ENCODE measurements at regions of chrX and their contacts with region 1.

Region 1: GRCh38 chrX:140050906-140051305 is 85.6 kb upstream of the CXorf66 start:
- DNase-seq: peak; percentile 29
- ATAC-seq: no peak
- H3K4me3 ChIP-seq: no peak overlapping the region
- H3K27ac ChIP-seq: no peak overlapping the region
- H3K4me1 ChIP-seq: no peaks in the 10 kb centered on the region
- H3K27me3 ChIP-seq: peaks cover 19% of the 10 kb centered on the region
- CTCF ChIP-seq: peak; percentile 60

Region 2: GRCh38 chrX:140503714-140504351 is 452.9 kb after region 1 on chrX:
- CTCF ChIA-PET with region 1: no interaction called
- POLR2A ChIA-PET with region 1: interaction called, 11 read pairs
- intact Hi-C with region 1: loop called (anchors 10 kb)
- DNase-seq: no peak
- ATAC-seq: peak; percentile 34; the same call in 1 of the 2 replicates
- H3K4me3 ChIP-seq: no peak overlapping the region
- H3K27ac ChIP-seq: no peak overlapping the region
- H3K4me1 ChIP-seq: peaks cover 16% of the 10 kb centered on the region
- H3K27me3 ChIP-seq: peaks cover 88% of the 10 kb centered on the region
- CTCF ChIP-seq: no peak

Region 3: DNA sequence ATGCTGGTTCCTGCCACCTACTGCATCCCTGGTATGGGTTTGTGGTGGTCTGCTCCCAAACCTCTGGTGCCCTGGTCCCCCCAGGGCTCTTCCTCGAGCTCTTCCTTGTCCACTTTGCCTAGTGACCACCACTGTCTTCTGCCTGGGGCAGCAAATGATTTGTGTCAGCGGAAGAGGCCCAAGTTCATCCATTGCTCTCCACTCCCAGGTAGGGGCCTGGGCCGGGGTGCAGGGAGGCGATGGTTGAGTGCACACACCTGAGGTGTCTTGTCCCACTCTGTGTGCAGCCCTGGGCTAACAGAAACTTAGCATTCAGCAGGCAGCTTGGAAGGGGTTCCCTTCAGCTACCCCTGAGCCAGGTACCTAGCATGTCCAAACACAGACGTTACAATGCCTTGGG is 529.6 kb after region 1 on chrX:
- CTCF ChIA-PET with region 1: no interaction called
- POLR2A ChIA-PET with region 1: no interaction called
- intact Hi-C with region 1: no loop called
- DNase-seq: no peak
- ATAC-seq: no peak
- H3K4me3 ChIP-seq: no peak overlapping the region
- H3K27ac ChIP-seq: no peak overlapping the region
- H3K4me1 ChIP-seq: no peaks in the 10 kb centered on the region
- H3K27me3 ChIP-seq: peaks cover 13% of the 10 kb centered on the region
- CTCF ChIP-seq: no peak

Region 4: DNA sequence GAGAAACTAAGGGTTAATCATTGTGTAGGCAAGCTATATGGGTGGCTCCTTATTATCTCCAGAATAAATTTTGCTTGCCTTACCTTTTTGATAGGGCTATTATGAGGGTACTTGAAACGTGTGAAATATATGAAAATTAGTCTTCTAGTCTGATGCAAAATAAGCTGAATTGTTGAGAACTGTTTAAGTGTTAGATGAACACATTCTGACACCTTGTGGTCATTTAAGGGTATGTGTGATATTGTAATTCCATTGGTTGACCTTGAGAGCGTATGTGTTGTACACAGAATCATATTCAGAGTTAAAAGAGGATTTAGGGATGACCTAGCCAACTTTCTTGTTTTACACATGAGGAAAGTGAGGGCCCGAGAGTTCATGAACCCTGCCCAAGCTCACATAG is 614.0 kb after region 1 on chrX:
- CTCF ChIA-PET with region 1: no interaction called
- POLR2A ChIA-PET with region 1: no interaction called
- intact Hi-C with region 1: loop called (anchors 2 kb)
- DNase-seq: peak; percentile 35
- ATAC-seq: 0 out of 2 replicates have a peak, but pooled peaks have one; percentile 29
- H3K4me3 ChIP-seq: no peak overlapping the region
- H3K27ac ChIP-seq: no peak overlapping the region
- H3K4me1 ChIP-seq: no peaks in the 10 kb centered on the region
- H3K27me3 ChIP-seq: peaks cover 14% of the 10 kb centered on the region; the same call in 1 of the 2 replicates
- CTCF ChIP-seq: peak; percentile 55

Region 5: GRCh38 chrX:140733769-140734342 is 683.0 kb after region 1 on chrX:
- CTCF ChIA-PET with region 1: no interaction called
- POLR2A ChIA-PET with region 1: no interaction called
- intact Hi-C with region 1: loop called (anchors 1 kb)
- DNase-seq: peak; percentile 59
- ATAC-seq: peak; percentile 91
- H3K4me3 ChIP-seq: no peak overlapping the region
- H3K27ac ChIP-seq: no peak overlapping the region
- H3K4me1 ChIP-seq: no peaks in the 10 kb centered on the region
- H3K27me3 ChIP-seq: no peaks in the 10 kb centered on the region; the same call in 1 of the 2 replicates
- CTCF ChIP-seq: peak; percentile 79

Measured in PC-3 (cell line).